ENCODE measurements at regions of chr6 and their contacts with region 1.

Region 1: DNA sequence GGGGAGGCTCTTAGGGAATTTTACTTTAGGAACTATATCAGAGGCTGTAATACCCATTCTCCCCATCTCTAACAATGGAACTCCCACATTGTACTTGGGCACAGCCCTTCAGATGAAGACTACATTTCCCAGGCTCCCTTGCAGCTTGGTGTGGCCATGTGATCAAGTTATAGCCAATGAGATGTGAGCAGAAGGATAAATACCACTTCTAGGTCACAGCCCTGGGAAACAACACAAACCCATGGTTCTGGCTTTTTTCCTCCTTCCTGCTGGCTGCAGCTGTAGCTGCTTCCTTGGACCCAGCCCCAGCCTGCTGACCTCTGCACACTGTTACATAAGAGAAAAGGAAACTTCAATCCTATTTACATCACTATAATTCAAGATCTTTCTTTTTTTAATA is 445.9 kb upstream of the JARID2 start:
- DNase-seq: peak; percentile 38
- H3K4me3 Mint-ChIP-seq: no peak overlapping the region
- H3K27ac Mint-ChIP-seq: no peak overlapping the region
- H3K4me1 Mint-ChIP-seq: no peaks in the 10 kb centered on the region
- H3K27me3 Mint-ChIP-seq: peaks cover 21% of the 10 kb centered on the region
- CTCF ChIP-seq: no peak

Region 2: GRCh38 chr6:14728396-14729024 is 71.4 kb before region 1 on chr6:
- CTCF ChIA-PET with region 1: no interaction called
- intact Hi-C with region 1: loop called (anchors 10 kb)
- DNase-seq: no peak
- H3K4me3 Mint-ChIP-seq: no peak overlapping the region
- H3K27ac Mint-ChIP-seq: no peak overlapping the region
- H3K4me1 Mint-ChIP-seq: peaks cover 21% of the 10 kb centered on the region
- H3K27me3 Mint-ChIP-seq: no peaks in the 10 kb centered on the region
- CTCF ChIP-seq: no peak

Measured in Calu3 (cell line).